Left ventricle myocardium superior (tissue), 1 donor: ENCODE measurements at regions of chr3 and their contacts with region 1.

Region 1: GRCh38 chr3:39707314-39707909 is 102.0 kb upstream of the MYRIP start:
- DNase-seq: no peak
- ATAC-seq: no peak

Region 2: GRCh38 chr3:40008796-40009195 is 301.4 kb after region 1 on chr3:
- intact Hi-C with region 1: loop called (anchors 5 kb)
- DNase-seq: no peak
- ATAC-seq: no peak

Region 3: GRCh38 chr3:40179016-40179415 is 471.6 kb after region 1 on chr3:
- intact Hi-C with region 1: loop called (anchors 10 kb)
- DNase-seq: peak; percentile 81
- ATAC-seq: peak; percentile 76